ENCODE measurements at regions of chr2 and their contacts with region 1.

Region 1: DNA sequence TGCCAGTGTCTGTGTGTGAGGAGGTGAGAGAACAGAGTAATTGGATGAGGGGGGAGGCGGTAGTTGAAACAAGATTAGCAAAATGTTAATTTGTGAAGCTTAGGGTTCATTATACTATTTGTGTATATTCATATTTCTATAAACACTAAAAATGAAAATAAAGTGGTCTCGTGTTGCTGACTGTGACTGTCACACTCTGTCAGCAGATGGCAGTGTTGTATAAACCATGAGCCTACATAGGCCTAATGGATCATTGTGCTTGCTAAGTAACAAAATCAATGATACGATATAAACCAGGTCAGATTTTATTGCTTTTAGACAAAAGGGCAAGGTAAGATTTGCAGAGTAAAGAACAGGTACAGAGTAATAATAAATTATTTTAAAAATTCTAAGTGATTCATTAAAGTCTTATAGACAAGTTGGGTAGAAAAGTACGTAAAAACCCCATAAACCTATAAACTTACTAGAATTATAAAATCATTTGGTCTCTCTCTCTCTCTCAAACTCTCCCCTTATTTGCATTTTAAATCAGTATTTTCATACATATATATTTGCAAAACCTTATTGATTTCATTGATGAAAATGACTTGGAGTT is 182.7 kb downstream of the RPIA start:
- DNase-seq: peak; percentile 63
- ATAC-seq: peak; percentile 78
- H3K4me3 Mint-ChIP-seq: no peak overlapping the region
- H3K27ac Mint-ChIP-seq: no peak overlapping the region
- H3K4me1 Mint-ChIP-seq: no peaks in the 10 kb centered on the region
- H3K27me3 Mint-ChIP-seq: peaks cover 7% of the 10 kb centered on the region

Region 2: DNA sequence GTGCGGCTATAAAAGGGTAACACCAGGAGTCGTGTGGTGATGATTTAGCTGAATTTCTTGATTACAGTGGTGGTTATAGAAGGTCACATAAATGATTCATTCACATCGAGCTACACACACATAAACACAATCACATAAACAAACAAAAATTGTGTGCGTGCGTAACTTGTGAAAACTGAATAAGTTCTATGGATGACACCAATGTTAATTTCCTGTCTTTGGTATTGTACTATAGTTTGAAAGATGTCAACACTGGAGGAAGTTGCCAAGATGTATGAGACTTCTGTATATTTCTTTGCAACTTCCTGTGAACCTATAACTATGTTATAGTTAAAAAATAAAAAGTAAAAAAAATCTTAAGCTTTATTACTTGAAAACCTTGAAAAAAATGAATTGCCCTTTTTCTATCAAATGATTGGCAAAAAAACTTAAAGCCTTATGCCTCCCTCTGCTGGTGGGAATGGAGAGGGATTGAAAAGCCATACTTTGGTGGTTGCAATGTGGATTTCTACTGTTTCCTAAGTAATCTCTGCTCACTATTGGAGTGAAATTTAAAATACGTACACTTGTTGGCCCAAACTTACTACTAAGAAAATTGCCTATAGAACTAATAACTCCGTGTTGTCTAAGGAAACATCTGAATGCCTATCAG is 45.1 kb after region 1 on chr2:
- CTCF ChIA-PET with region 1: interaction called, 3 read pairs
- POLR2A ChIA-PET with region 1: no interaction called
- intact Hi-C with region 1: loop called in 1 of 2 experiments (anchors 1 kb)
- DNase-seq: peak; percentile 17
- ATAC-seq: no peak
- H3K4me3 Mint-ChIP-seq: no peak overlapping the region
- H3K27ac Mint-ChIP-seq: no peak overlapping the region
- H3K4me1 Mint-ChIP-seq: peaks cover 1% of the 10 kb centered on the region
- H3K27me3 Mint-ChIP-seq: peaks cover 5% of the 10 kb centered on the region

Region 3: GRCh38 chr2:88933980-88934379 is 59.8 kb after region 1 on chr2:
- CTCF ChIA-PET with region 1: no interaction called
- POLR2A ChIA-PET with region 1: no interaction called
- intact Hi-C with region 1: loop called in 1 of 2 experiments (anchors 5 kb)
- DNase-seq: no peak
- ATAC-seq: no peak
- H3K4me3 Mint-ChIP-seq: no peak overlapping the region
- H3K27ac Mint-ChIP-seq: no peak overlapping the region
- H3K4me1 Mint-ChIP-seq: no peaks in the 10 kb centered on the region
- H3K27me3 Mint-ChIP-seq: no peaks in the 10 kb centered on the region

Region 4: DNA sequence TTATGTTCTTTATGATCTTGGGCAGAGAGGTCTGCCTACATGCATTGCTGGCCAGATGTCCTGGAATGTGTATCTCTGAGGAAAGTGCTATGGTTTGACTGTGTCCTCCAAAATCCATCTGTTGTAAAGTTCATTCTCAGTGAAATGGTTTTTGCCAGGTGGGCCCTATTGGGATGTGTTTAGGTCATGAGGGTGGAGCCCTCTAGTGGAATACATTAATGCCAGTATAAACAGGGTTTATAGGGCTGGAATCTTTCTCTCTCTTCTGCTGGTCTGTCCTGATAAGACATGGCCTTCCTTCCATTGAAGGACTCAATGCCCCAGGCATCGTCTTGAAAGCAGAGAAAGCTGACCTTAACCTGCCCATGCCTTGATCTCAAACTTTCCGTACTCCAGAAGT is 75.8 kb after region 1 on chr2:
- CTCF ChIA-PET with region 1: interaction called, 3 read pairs
- POLR2A ChIA-PET with region 1: no interaction called
- intact Hi-C with region 1: loop called in 1 of 2 experiments (anchors 5 kb)
- DNase-seq: no peak
- ATAC-seq: no peak
- H3K4me3 Mint-ChIP-seq: no peak overlapping the region
- H3K27ac Mint-ChIP-seq: no peak overlapping the region
- H3K4me1 Mint-ChIP-seq: no peaks in the 10 kb centered on the region
- H3K27me3 Mint-ChIP-seq: peaks cover 6% of the 10 kb centered on the region

Measured in activated CD4-positive, alpha-beta T cell treated with anti-CD3 and anti-CD28 coated beads for 36 hours (primary cell).